ENCODE measurements at regions of chr3 and their contacts with region 1.

Region 1: DNA sequence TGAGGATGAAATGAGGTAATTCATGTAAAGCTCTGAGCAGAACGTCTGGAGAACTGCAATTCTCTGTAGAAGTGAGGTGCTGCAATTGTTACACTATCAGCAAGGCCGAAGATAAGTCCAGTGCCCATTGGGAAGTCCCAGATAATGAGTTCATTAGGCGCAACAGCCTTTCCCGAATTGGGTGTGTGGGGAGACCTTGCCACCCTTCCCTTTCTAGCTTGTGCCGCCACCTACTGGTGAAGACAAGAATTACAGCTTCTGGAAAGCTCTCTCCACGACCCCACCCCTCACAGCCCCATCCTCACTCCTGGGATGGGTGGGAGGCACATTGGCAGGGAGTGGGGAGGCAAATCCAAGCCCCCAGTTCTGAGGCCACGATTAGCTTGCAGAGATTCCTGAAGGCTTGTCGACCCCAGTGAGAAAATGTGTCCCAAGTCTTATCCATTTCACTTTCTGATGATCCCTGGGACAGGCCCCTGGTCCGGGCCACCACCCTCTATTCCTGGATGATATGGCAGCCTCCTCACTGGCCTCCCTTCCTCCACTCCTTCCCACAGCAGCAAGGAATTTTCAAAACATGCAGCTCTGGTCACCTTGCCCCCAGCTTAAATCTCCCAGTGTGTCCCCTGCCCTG is 36.4 kb downstream of the FAM3D start:
- DNase-seq: peak; percentile 57
- H3K4me3 Mint-ChIP-seq: no peak overlapping the region
- H3K27ac Mint-ChIP-seq: no peak overlapping the region
- H3K4me1 Mint-ChIP-seq: peaks cover 4% of the 10 kb centered on the region
- H3K27me3 Mint-ChIP-seq: peaks cover 7% of the 10 kb centered on the region

Region 2: GRCh38 chr3:58568572-58569286 is 61.5 kb before region 1 on chr3:
- CTCF ChIA-PET with region 1: interaction called, 148 read pairs
- POLR2A ChIA-PET with region 1: no interaction called
- DNase-seq: peak; percentile 78
- H3K4me3 Mint-ChIP-seq: no peak overlapping the region
- H3K27ac Mint-ChIP-seq: no peak overlapping the region
- H3K4me1 Mint-ChIP-seq: peaks cover 6% of the 10 kb centered on the region
- H3K27me3 Mint-ChIP-seq: peaks cover 7% of the 10 kb centered on the region

Region 3: DNA sequence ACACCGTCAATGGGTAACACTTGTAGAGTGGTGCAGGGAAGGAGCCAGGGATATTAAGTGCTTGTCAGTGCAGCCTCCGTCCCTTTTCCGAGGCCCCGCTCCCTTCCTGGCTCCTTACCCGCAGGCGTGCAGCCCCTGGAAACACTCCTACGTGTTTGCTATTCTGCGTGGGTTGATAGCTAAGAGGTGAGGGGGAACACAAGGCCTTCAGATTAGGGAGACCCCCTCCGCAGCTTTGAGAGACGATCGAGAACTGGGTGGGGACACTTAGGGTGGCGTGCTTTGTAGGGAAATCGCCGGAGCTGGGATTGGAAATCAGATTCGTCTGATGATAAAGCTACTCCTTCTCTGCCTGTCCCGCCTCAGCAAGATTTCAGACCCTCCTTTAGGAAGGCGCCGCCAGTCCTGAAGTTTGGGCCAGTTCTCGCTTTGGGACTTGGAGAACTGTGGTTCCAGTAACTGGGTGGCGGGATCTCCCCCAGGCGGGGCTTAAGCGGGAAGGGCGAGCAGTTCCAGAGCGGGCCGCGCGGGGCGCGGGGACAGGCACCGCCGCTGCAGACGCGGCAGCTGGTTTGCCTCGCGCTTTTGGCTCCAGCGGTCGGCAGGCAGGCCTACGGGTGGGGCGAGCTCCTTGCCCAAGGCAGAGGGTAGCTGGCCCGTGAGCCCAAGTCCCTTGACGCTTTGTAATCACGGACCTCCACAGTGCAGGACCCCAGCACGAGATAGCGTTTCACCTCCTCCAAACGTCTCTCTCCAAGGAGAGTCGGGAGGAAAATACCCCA is 45.0 kb before region 1 on chr3:
- CTCF ChIA-PET with region 1: interaction called, 12 read pairs
- POLR2A ChIA-PET with region 1: no interaction called
- DNase-seq: peak; percentile 71
- H3K4me3 Mint-ChIP-seq: peak overlapping the region; percentile 90
- H3K27ac Mint-ChIP-seq: no peak overlapping the region
- H3K4me1 Mint-ChIP-seq: peaks cover 19% of the 10 kb centered on the region
- H3K27me3 Mint-ChIP-seq: peaks cover 53% of the 10 kb centered on the region

Region 4: DNA sequence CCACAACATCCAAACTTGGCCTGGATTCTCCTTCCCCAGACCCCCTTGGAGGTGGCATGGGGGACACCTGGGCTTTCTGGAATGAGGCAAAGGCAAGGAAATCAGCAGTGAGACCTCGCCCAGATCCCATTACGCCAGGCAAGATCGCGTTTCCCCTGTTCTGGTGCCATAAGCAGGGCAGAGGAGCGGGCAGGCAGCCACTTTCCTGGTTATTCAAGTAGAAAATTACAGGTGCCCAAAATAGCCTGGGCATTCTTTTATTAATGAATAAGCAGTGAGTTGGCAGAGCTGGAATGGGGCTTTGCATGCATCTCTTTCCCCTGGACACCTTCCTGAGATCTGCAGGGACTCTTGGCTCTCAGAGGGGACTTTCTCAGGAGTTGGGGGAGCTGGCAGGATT is 21.5 kb before region 1 on chr3:
- CTCF ChIA-PET with region 1: interaction called, 19 read pairs
- POLR2A ChIA-PET with region 1: no interaction called
- DNase-seq: no peak
- H3K4me3 Mint-ChIP-seq: no peak overlapping the region
- H3K27ac Mint-ChIP-seq: no peak overlapping the region
- H3K4me1 Mint-ChIP-seq: peaks cover 25% of the 10 kb centered on the region
- H3K27me3 Mint-ChIP-seq: peaks cover 23% of the 10 kb centered on the region